Left cardiac atrium (tissue), 4 donors: ENCODE measurements at regions of chr21 and their contacts with region 1.

Region 1: GRCh38 chr21:44024887-44025362 is 12.8 kb downstream of the TRAPPC10 start:
- DNase-seq: peak; percentile 76
- ATAC-seq: peak; percentile 86 to 93

Region 2: DNA sequence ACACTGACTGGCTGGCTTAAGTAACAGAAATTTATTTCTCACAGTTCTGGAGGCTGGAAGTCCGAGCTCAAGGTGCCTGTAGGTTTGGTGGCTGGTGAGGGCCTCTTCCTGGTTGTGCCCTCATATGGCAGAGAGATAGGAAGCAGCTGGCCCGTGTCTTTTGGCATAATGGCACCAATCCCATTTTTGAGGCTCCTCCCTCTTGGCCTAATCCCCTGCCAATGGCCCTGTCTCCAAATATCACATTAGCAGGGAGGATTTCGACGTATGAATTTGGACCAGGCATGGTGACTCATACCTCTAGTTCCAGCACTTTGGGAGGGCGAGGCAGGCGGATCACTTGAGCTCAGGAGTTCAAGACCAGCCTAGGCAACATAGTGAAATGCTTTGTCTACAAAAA is 122.5 kb before region 1 on chr21:
- intact Hi-C with region 1: no loop called
- DNase-seq: no peak
- ATAC-seq: peak; percentile 54 to 57

Region 3: GRCh38 chr21:44487831-44488230 is 462.9 kb after region 1 on chr21:
- intact Hi-C with region 1: loop called in 1 of 2 experiments (anchors 10 kb)
- DNase-seq: no peak
- ATAC-seq: no peak